GM10248 (cell line): ENCODE measurements at regions of chr13 and their contacts with region 1.

Region 1: GRCh38 chr13:79679334-79679733 is 198.4 kb downstream of the NDFIP2 start:
- DNase-seq: peak; percentile 12
- CTCF ChIP-seq: peak; percentile 86

Region 2: DNA sequence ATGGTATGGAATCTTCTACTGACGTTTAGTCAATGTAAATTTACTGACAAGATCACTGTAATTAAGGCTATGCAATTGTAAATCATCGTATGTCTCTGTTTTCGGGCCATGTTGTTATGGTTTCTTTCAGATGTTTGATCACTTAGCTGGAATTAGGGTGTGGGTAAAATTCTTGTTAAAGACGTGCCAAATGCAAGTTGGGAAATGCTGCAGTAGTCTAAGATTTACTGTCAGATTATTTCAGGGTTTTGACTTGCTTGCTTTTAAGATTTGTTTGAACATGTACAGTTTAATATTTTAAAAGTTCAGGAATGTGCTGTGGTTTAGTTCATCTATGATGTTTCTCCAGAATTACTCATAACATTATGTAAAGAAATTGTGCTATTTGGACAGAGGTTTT is 187.6 kb before region 1 on chr13:
- CTCF ChIA-PET with region 1: no interaction called
- POLR2A ChIA-PET with region 1: no interaction called
- DNase-seq: no peak
- CTCF ChIP-seq: no peak

Region 3: DNA sequence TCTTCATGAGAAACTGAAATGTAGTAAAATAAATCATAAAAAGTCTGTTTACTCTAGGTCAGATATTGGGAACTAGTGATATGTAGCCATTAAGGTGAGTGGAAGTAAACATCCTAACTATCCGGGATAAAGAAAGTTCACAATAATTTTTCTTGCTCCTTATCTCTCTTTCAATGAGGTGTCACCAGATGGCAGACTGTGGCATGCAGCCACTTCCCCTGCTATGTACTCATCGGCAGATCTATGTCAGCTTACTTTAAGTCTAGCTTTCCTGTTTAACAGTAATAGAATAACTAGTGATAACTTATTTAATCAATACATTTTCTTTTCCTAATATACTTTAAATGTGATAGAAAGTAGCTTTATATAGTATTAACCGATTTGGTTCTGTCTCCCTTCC is 16.5 kb before region 1 on chr13:
- CTCF ChIA-PET with region 1: interaction called, 34 read pairs
- POLR2A ChIA-PET with region 1: no interaction called
- DNase-seq: no peak
- CTCF ChIP-seq: no peak

Region 4: DNA sequence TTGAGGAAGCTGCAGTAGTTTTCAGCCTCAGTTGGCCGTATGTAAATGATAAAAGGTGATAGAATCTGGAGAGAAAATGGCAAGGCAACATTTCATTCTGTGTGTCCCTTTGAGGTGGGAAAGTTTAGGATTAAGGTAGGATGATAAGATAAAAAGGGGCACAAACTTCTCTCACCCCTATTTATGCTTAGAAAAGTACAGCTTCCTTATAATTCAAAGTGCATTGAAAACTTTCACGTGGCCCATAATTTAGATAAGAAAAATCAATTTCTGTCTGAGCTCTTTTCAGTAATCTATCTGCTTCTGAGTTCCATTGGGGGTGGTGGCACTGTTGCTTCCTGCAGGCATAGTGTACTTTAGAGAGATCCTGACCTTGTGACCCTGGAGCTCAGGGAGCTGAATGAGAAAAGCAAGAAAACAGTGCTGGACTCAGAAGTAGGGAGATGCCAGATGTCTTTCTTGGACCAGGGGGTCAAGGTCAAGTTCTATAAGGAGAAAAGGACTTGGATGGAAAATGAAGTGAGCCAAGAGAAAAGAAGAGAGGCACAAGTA is 11.1 kb before region 1 on chr13:
- CTCF ChIA-PET with region 1: interaction called, 34 read pairs
- POLR2A ChIA-PET with region 1: no interaction called
- DNase-seq: no peak
- CTCF ChIP-seq: no peak

Region 5: GRCh38 chr13:79692846-79693245 is 13.5 kb after region 1 on chr13:
- CTCF ChIA-PET with region 1: interaction called, 19 read pairs
- POLR2A ChIA-PET with region 1: no interaction called
- DNase-seq: no peak
- CTCF ChIP-seq: no peak

Region 6: DNA sequence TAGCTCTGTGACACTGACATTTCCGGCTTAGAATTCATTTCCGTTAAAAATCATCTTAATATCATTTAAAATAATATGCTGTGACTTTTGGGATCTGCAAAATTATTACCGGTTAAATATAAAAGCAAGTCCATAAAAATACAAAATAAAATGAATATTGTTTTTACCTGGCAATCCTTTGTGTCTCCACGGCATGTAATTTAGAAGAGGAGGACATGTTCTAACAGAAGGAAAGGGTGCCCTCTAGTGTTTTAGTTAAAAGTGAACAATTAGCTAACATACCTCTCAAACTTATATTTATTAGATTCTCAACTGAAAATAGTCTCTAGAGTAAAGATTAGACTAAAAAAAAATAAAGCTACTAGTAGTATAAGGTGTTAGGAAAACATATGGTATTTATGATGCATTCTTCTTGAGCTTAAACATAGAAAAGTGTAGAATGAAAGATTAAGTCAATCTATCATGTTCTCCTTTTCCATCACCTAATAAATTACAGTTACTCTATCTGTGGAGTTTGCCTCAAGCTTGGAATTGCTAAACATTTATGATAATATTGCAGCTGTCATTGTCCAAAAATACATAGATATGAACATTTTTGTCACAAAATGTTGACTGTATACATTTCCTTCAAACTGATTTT is 1338.3 kb after region 1 on chr13:
- CTCF ChIA-PET with region 1: interaction called, 34 read pairs
- POLR2A ChIA-PET with region 1: no interaction called
- DNase-seq: peak; percentile 23
- CTCF ChIP-seq: peak; percentile 54